Upper lobe of right lung (tissue), 1 donor: ENCODE measurements at regions of chr12 and their contacts with region 1.

Region 1: DNA sequence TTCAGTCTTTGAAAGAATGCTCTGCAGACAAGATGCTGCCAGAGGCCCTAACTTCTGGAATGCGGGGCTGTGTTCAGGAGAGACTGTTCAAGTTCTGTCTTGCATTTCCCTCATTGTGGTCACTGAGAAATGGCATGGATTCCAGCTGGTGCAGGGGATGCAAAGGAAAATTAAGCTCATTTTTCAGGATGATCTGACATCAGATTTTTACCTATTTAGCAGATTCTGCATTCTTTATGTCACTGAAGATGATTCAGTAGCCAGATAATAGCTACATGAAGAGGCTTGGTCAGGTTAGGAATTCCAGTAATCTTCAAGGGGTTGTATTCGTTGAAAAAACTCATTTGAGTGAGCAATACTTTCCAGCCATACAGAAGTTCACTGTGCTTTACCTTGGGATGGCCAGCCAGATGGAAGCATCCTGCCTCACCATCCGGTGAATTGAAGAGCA is 16.1 kb upstream of the MFAP5 start:
- DNase-seq: no peak
- ATAC-seq: no peak
- H3K4me3 ChIP-seq: no peak overlapping the region
- H3K27ac ChIP-seq: no peak overlapping the region
- H3K4me1 ChIP-seq: no peaks in the 10 kb centered on the region
- H3K27me3 ChIP-seq: no peaks in the 10 kb centered on the region
- CTCF ChIP-seq: no peak

Region 2: GRCh38 chr12:9049520-9050133 is 370.9 kb after region 1 on chr12:
- intact Hi-C with region 1: loop called (anchors 10 kb)
- DNase-seq: no peak
- ATAC-seq: peak; percentile 66
- H3K4me3 ChIP-seq: no peak overlapping the region
- H3K27ac ChIP-seq: no peak overlapping the region
- H3K4me1 ChIP-seq: no peaks in the 10 kb centered on the region
- H3K27me3 ChIP-seq: no peaks in the 10 kb centered on the region
- CTCF ChIP-seq: peak; percentile 58